Naive thymus-derived CD4-positive, alpha-beta T cell (primary cell): ENCODE measurements at regions of chr13 and their contacts with region 1.

Region 1: GRCh38 chr13:102845630-102846260 is at the start of gene ERCC5:
- DNase-seq: peak; percentile 93 to 99 (median 97)
- ATAC-seq: peak; percentile 89
- H3K4me3 ChIP-seq: peak within 1 kb of the TSS; percentile 98
- H3K4me3 Mint-ChIP-seq: peak within 1 kb of the TSS; percentile 86 to 100 (median 96)
- H3K27ac ChIP-seq: peak within 1 kb of the TSS; percentile 97
- H3K27ac Mint-ChIP-seq: peak within 1 kb of the TSS; percentile 93 to 100 (median 99)
- H3K4me1 ChIP-seq: peaks cover 19 to 34% of the 10 kb centered on the region in 2 donors
- H3K4me1 Mint-ChIP-seq: peaks cover 31 to 52% (median 42%) of the 10 kb centered on the region in 7 donors
- H3K27me3 ChIP-seq: no peaks in the 10 kb centered on the region
- H3K27me3 Mint-ChIP-seq: peaks cover 0 to 4% (median 0%) of the 10 kb centered on the region in 5 donors
- total RNA-seq, gene ERCC5: 79.6 to 158 (median 123) TPM

Region 2: GRCh38 chr13:101626925-101627555 is 1218.7 kb before region 1 on chr13:
- CTCF ChIA-PET with region 1: no interaction called
- POLR2A ChIA-PET with region 1: interaction called, 5 read pairs
- intact Hi-C with region 1: loop called in 1 of 2 experiments (anchors 10 kb)
- DNase-seq: peak in 6 of 9 donors; percentile 24 to 62 (median 48)
- ATAC-seq: peak; percentile 73
- H3K4me3 ChIP-seq: peak overlapping the region; percentile 40
- H3K4me3 Mint-ChIP-seq: peak overlapping the region; percentile 63 to 92 (median 78)
- H3K27ac ChIP-seq: peak overlapping the region; percentile 67
- H3K27ac Mint-ChIP-seq: peak overlapping the region; percentile 15 to 89 (median 76)
- H3K4me1 ChIP-seq: peaks cover 29 to 33% of the 10 kb centered on the region in 2 donors
- H3K4me1 Mint-ChIP-seq: peaks cover 9 to 49% (median 48%) of the 10 kb centered on the region in 7 donors
- H3K27me3 ChIP-seq: no peaks in the 10 kb centered on the region
- H3K27me3 Mint-ChIP-seq: peaks cover 0 to 27% (median 0%) of the 10 kb centered on the region in 5 donors

Region 3: DNA sequence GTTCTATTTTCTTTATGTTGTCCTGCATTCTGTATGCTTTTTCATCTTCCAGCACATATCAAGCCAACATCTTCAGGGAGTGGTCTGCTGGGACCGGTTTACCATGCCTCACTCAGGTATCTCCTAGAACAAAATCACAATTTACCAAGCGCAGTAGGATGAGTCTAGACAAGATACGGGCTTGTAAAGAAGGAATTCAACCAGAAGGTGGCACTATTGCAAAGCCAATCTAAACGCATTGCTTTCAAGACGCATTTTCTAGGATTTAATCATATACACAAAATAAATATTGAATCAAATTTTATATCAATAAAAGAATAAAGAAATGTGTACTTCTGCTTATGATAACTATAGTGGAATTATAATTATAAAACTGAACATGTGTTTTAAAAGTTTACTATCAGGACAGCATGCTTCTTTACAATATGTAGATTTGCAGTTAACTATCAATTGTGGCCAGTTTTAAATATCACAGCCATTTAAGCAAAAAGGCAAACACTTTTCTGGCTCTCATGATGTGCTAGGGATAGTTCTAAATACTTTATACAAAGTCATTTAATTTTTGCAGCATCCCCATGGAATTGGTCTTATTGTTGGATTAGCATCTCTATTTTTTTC is 265.1 kb before region 1 on chr13:
- CTCF ChIA-PET with region 1: interaction called, 27 read pairs
- POLR2A ChIA-PET with region 1: interaction called, 24 read pairs
- intact Hi-C with region 1: loop called (anchors 1 kb)
- DNase-seq: peak in 7 of 9 donors; percentile 37 to 70 (median 63)
- ATAC-seq: peak; percentile 85
- H3K4me3 ChIP-seq: no peak overlapping the region
- H3K4me3 Mint-ChIP-seq: no peak overlapping the region
- H3K27ac ChIP-seq: no peak overlapping the region
- H3K27ac Mint-ChIP-seq: peak overlapping the region in 1 of 9 donors; percentile 57
- H3K4me1 ChIP-seq: peaks cover 0 to 8% of the 10 kb centered on the region in 2 donors
- H3K4me1 Mint-ChIP-seq: peaks cover 8 to 14% (median 10%) of the 10 kb centered on the region in 7 donors
- H3K27me3 ChIP-seq: no peaks in the 10 kb centered on the region
- H3K27me3 Mint-ChIP-seq: peaks cover 4 to 26% (median 5%) of the 10 kb centered on the region in 5 donors

Region 4: DNA sequence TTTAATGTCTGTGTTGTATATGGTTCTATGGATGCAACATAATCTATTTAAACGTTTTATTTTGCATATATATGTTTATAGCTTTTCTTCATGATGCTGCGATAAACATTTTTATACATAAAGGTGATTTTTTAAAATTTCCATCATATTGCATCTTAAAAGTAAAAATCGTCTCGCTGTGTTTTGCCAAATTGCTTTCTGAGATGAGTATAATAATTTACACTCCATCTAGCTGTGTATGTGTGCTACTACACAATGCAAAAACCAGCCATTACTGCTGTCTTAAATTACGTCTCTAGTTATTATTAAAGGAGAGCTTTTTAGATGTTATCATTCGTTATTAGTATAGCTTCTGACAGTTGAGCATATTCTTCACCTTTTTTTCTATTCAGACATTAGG is 188.1 kb before region 1 on chr13:
- CTCF ChIA-PET with region 1: no interaction called
- POLR2A ChIA-PET with region 1: no interaction called
- intact Hi-C with region 1: loop called (anchors 5 kb)
- DNase-seq: peak in 1 of 9 donors; percentile 5
- ATAC-seq: no peak
- H3K4me3 ChIP-seq: no peak overlapping the region
- H3K4me3 Mint-ChIP-seq: no peak overlapping the region
- H3K27ac ChIP-seq: no peak overlapping the region
- H3K27ac Mint-ChIP-seq: no peak overlapping the region
- H3K4me1 ChIP-seq: no peaks in the 10 kb centered on the region
- H3K4me1 Mint-ChIP-seq: peaks cover 0 to 6% (median 0%) of the 10 kb centered on the region in 7 donors
- H3K27me3 ChIP-seq: no peaks in the 10 kb centered on the region
- H3K27me3 Mint-ChIP-seq: no peaks in the 10 kb centered on the region

Region 5: GRCh38 chr13:102724923-102725322 is 120.8 kb before region 1 on chr13:
- CTCF ChIA-PET with region 1: no interaction called
- POLR2A ChIA-PET with region 1: no interaction called
- intact Hi-C with region 1: loop called (anchors 1 kb)
- DNase-seq: peak in 1 of 9 donors; percentile 6
- ATAC-seq: peak; percentile 54
- H3K4me3 ChIP-seq: no peak overlapping the region
- H3K4me3 Mint-ChIP-seq: no peak overlapping the region
- H3K27ac ChIP-seq: no peak overlapping the region
- H3K27ac Mint-ChIP-seq: no peak overlapping the region
- H3K4me1 ChIP-seq: no peaks in the 10 kb centered on the region
- H3K4me1 Mint-ChIP-seq: peaks cover 0 to 3% (median 0%) of the 10 kb centered on the region in 7 donors
- H3K27me3 ChIP-seq: no peaks in the 10 kb centered on the region
- H3K27me3 Mint-ChIP-seq: peaks cover 8 to 40% (median 26%) of the 10 kb centered on the region in 5 donors

Region 6: GRCh38 chr13:102800145-102801041 is 45.4 kb before region 1 on chr13:
- CTCF ChIA-PET with region 1: no interaction called
- POLR2A ChIA-PET with region 1: interaction called, 12 read pairs
- intact Hi-C with region 1: loop called (anchors 1 kb)
- DNase-seq: peak; percentile 58 to 92 (median 69)
- ATAC-seq: peak; percentile 90
- H3K4me3 ChIP-seq: peak overlapping the region; percentile 74
- H3K4me3 Mint-ChIP-seq: peak overlapping the region; percentile 80 to 98 (median 87)
- H3K27ac ChIP-seq: no peak overlapping the region
- H3K27ac Mint-ChIP-seq: peak overlapping the region in 8 of 9 donors; percentile 11 to 90 (median 47)
- H3K4me1 ChIP-seq: peaks cover 6% of the 10 kb centered on the region in 2 donors
- H3K4me1 Mint-ChIP-seq: peaks cover 6 to 42% (median 19%) of the 10 kb centered on the region in 7 donors
- H3K27me3 ChIP-seq: peaks cover 0 to 3% of the 10 kb centered on the region in 2 donors
- H3K27me3 Mint-ChIP-seq: peaks cover 0 to 28% (median 17%) of the 10 kb centered on the region in 5 donors